Thyroid gland (tissue), 4 donors: ENCODE measurements at regions of chr20 and their contacts with region 1.

Region 1: GRCh38 chr20:58650776-58651558 is at the start of gene STX16:
- DNase-seq: peak; percentile 89 to 91
- H3K4me3 ChIP-seq: peak within 1 kb of the TSS; percentile 65 to 72 (median 68)
- H3K27ac ChIP-seq: peak within 1 kb of the TSS; percentile 80 to 97 (median 86)
- H3K4me1 ChIP-seq: peaks cover 23 to 24% of the 10 kb centered on the region in 2 donors
- H3K27me3 ChIP-seq: no peaks in the 10 kb centered on the region
- CTCF ChIP-seq: peak; percentile 26 to 76 (median 60)
- POLR2A ChIP-seq: peak in 1 of 2 donors; percentile 74
- total RNA-seq, gene STX16: 42.5 to 59.1 (median 53.0) TPM

Region 2: GRCh38 chr20:58692594-58693226 is 41.7 kb after region 1 on chr20 and contains the start of gene NPEPL1:
- intact Hi-C with region 1: loop called (anchors 5 kb)
- DNase-seq: peak; percentile 67 to 74
- H3K4me3 ChIP-seq: peak within 1 kb of the TSS in 1 of 3 donors; percentile 58
- H3K27ac ChIP-seq: peak within 1 kb of the TSS; percentile 90 to 93 (median 92)
- H3K4me1 ChIP-seq: peaks cover 9 to 37% of the 10 kb centered on the region in 2 donors
- H3K27me3 ChIP-seq: no peaks in the 10 kb centered on the region
- CTCF ChIP-seq: peak in 3 of 6 experiments; percentile 40 to 52 (median 50)
- POLR2A ChIP-seq: peak in 1 of 2 donors; percentile 47
- total RNA-seq, gene NPEPL1: 41.6 to 56.0 (median 47.2) TPM

Region 3: GRCh38 chr20:58850693-58851174 is 199.8 kb after region 1 on chr20 and contains the start of gene GNAS-AS1:
- intact Hi-C with region 1: loop called (anchors 10 kb)
- DNase-seq: peak; percentile 84 to 86
- H3K4me3 ChIP-seq: peak within 1 kb of the TSS in 2 of 3 donors; percentile 30 to 41
- H3K27ac ChIP-seq: no peak within 1 kb of the TSS
- H3K4me1 ChIP-seq: peaks cover 6 to 22% of the 10 kb centered on the region in 2 donors
- H3K27me3 ChIP-seq: peaks cover 7% of the 10 kb centered on the region
- CTCF ChIP-seq: no peak
- POLR2A ChIP-seq: no peak
- total RNA-seq, gene GNAS-AS1: 0.42 to 1.9 (median 1.1) TPM